CD4-positive, alpha-beta T cell (primary cell): ENCODE measurements at regions of chrX and their contacts with region 1.

Region 1: GRCh38 chrX:12946838-12947544 is 27.9 kb upstream of the TMSB4X start:
- DNase-seq: peak; percentile 60 to 87 (median 69)
- ATAC-seq: peak; percentile 21
- H3K4me3 ChIP-seq: no peak overlapping the region
- H3K4me3 Mint-ChIP-seq: peak overlapping the region; percentile 75
- H3K27ac ChIP-seq: peak overlapping the region; percentile 29 to 59
- H3K27ac Mint-ChIP-seq: peak overlapping the region; percentile 95
- H3K4me1 ChIP-seq: peaks cover 49% of the 10 kb centered on the region
- H3K4me1 Mint-ChIP-seq: peaks cover 58% of the 10 kb centered on the region
- H3K27me3 ChIP-seq: no peaks in the 10 kb centered on the region
- H3K27me3 Mint-ChIP-seq: no peaks in the 10 kb centered on the region
- CTCF ChIP-seq: peak; percentile 84

Region 2: DNA sequence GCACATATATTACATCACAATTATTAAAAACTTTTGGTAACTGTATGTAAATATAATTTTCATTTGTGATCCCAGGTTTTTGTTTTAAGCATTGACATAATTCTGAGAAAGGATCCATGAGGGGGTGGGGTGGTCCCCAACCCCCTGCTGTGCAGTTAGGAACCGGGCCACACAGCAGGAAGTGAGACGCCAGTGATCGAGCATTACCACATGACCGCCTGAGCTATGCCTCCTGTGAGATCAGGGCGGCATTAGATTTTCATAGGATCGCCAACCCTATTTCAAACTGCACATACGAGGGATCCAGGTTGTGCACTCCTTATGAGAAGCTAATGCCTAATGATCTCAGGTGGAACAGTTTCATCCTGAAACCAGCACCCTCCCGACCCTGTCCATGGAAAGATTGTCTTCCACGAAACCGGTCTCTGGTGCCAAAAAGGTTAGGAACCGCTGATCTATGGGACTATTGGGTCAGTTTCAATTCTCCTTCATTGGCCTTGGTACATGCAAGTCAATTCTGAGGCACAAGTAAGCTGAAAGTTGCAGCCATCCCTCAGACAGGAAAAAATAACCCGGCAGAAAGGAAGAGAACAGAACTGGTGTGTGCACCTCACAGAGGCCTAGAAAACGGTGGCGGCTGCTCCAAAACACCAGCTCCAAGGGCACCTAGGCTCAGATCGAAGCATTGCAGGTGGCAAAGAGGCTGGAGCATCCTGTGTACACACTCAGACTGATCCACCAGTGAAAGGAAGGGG is 20.9 kb after region 1 on chrX:
- CTCF ChIA-PET with region 1: interaction called, 181 read pairs
- POLR2A ChIA-PET with region 1: interaction called, 1,050 read pairs
- intact Hi-C with region 1: loop called in 1 of 2 experiments (anchors 1 kb)
- DNase-seq: peak in 3 of 14 experiments; percentile 57 to 66 (median 58)
- ATAC-seq: peak; percentile 16
- H3K4me3 ChIP-seq: peak overlapping the region; percentile 42
- H3K4me3 Mint-ChIP-seq: peak overlapping the region; percentile 78
- H3K27ac ChIP-seq: peak overlapping the region; percentile 69 to 71
- H3K27ac Mint-ChIP-seq: peak overlapping the region; percentile 95
- H3K4me1 ChIP-seq: peaks cover 51% of the 10 kb centered on the region
- H3K4me1 Mint-ChIP-seq: peaks cover 53% of the 10 kb centered on the region
- H3K27me3 ChIP-seq: no peaks in the 10 kb centered on the region
- H3K27me3 Mint-ChIP-seq: no peaks in the 10 kb centered on the region
- CTCF ChIP-seq: no peak

Region 3: GRCh38 chrX:13005661-13006473 is 58.9 kb after region 1 on chrX:
- CTCF ChIA-PET with region 1: interaction called, 22 read pairs
- POLR2A ChIA-PET with region 1: interaction called, 13 read pairs
- intact Hi-C with region 1: loop called in 1 of 2 experiments (anchors 10 kb)
- DNase-seq: peak in 9 of 14 experiments; percentile 13 to 63 (median 26)
- ATAC-seq: peak; percentile 60
- H3K4me3 ChIP-seq: no peak overlapping the region
- H3K4me3 Mint-ChIP-seq: peak overlapping the region; percentile 86
- H3K27ac ChIP-seq: peak overlapping the region; percentile 43 to 48
- H3K27ac Mint-ChIP-seq: peak overlapping the region; percentile 96
- H3K4me1 ChIP-seq: peaks cover 60% of the 10 kb centered on the region
- H3K4me1 Mint-ChIP-seq: peaks cover 75% of the 10 kb centered on the region
- H3K27me3 ChIP-seq: no peaks in the 10 kb centered on the region
- H3K27me3 Mint-ChIP-seq: no peaks in the 10 kb centered on the region
- CTCF ChIP-seq: no peak

Region 4: GRCh38 chrX:13078739-13079444 is 131.9 kb after region 1 on chrX:
- CTCF ChIA-PET with region 1: interaction called, 8 read pairs
- POLR2A ChIA-PET with region 1: interaction called, 12 read pairs
- intact Hi-C with region 1: no loop called
- DNase-seq: peak in 4 of 14 experiments; percentile 34 to 56 (median 48)
- ATAC-seq: no peak
- H3K4me3 ChIP-seq: peak overlapping the region; percentile 28
- H3K4me3 Mint-ChIP-seq: peak overlapping the region; percentile 62
- H3K27ac ChIP-seq: peak overlapping the region; percentile 62
- H3K27ac Mint-ChIP-seq: peak overlapping the region; percentile 95
- H3K4me1 ChIP-seq: peaks cover 76% of the 10 kb centered on the region
- H3K4me1 Mint-ChIP-seq: peaks cover 96% of the 10 kb centered on the region
- H3K27me3 ChIP-seq: no peaks in the 10 kb centered on the region
- H3K27me3 Mint-ChIP-seq: no peaks in the 10 kb centered on the region
- CTCF ChIP-seq: no peak

Region 5: DNA sequence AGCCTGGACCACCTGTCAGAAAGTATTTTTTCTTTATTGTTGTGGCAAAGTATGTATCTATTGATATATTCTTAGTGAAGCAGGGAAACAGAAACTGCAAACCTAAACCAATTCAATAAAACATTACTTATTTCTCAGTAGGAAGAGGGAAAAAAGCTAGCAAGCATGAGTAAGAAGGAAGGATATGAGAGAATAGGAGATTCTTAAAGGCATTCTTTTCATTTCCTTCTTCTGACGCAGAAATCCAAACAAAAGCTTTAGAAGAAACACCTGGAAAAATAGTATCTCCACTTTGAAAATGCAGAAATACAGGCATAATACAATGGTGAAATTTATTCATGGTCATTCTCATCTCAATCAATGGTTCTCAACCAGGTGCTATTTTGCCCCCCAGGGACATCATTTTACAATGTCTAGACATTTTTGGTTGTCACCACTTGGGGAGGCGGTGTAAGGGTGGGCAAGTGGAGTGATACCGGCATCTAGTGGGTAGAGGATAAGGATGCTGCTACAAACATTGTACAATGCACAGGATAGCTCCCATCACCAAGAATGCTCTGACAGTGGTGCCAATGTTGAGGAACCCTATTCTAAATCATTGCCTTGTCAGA is 394.6 kb after region 1 on chrX:
- CTCF ChIA-PET with region 1: no interaction called
- POLR2A ChIA-PET with region 1: no interaction called
- intact Hi-C with region 1: loop called in 1 of 2 experiments (anchors 10 kb)
- DNase-seq: peak in 4 of 14 experiments; percentile 1 to 13 (median 2)
- ATAC-seq: peak; percentile 32
- H3K4me3 ChIP-seq: no peak overlapping the region
- H3K4me3 Mint-ChIP-seq: no peak overlapping the region
- H3K27ac ChIP-seq: no peak overlapping the region
- H3K27ac Mint-ChIP-seq: no peak overlapping the region
- H3K4me1 ChIP-seq: no peaks in the 10 kb centered on the region
- H3K4me1 Mint-ChIP-seq: no peaks in the 10 kb centered on the region
- H3K27me3 ChIP-seq: no peaks in the 10 kb centered on the region
- H3K27me3 Mint-ChIP-seq: no peaks in the 10 kb centered on the region
- CTCF ChIP-seq: no peak